Esophagus squamous epithelium (tissue), 5 donors: ENCODE measurements at regions of chr17 and their contacts with region 1.

Region 1: DNA sequence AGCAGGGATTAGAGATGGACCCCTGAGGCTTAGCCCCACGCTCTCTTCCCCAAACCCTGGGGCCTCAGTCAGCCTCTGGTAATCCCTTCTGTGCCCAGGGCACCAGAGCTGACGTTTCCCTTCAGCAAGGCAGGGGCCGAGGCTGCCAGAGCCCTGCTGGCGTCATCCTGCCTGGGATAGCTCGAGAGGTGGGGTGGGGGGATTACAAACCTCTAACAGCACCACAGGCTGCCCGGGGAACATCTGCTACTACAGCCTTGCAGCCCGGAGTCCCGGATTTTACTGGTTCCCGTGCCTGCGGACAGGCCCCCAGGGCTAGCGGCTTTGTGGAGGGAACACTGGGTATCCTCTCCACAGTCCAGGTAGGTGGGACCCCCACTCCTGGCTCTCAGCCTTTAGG is at the start of gene AANAT:
- DNase-seq: no peak
- H3K4me3 ChIP-seq: no peak within 1 kb of the TSS
- H3K27ac ChIP-seq: no peak within 1 kb of the TSS
- H3K4me1 ChIP-seq: peaks cover 0 to 4% (median 4%) of the 10 kb centered on the region in 3 donors
- H3K27me3 ChIP-seq: no peaks in the 10 kb centered on the region
- CTCF ChIP-seq: no peak
- POLR2A ChIP-seq: no peak
- total RNA-seq, gene AANAT: not detected

Region 2: DNA sequence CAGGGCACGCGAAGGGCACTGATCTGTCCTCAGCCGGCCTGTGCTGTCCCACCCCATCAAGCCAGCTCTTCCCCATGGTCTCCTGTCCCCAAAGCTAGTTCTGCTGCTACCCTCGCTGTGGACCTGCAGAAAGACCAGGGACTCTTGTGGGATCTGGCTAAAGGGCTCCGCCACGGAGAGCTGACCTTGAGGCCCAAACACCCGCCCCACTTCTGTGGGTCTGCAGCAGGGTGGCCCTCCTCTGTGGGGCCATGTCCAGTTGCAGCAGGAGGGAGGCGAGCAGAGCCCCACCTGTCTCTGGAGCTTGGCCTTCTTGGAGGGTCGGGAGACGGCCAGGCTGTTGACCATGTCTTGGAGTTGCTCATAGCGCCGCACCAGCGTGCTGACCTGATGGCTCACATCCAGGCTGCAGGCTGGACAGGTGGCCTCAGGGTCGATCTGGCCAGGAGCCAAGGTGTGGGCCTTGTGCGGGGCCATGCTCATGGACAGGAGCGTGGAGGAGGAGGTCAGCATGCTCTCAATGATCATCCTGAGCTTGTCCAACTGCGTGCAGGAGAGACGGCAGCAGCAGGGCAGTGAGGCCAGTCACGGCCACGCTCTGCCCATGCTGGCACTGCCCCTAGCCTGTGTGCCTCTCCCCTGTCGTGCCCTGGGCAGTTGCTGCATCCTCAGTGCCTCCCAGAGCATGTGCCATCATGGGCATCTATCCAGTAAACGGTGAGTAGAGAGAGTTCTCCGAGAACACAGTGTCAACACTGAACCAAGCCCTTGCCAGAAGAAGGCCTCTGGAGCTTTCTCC is 185.6 kb before region 1 on chr17:
- intact Hi-C with region 1: no loop called
- DNase-seq: no peak
- H3K4me3 ChIP-seq: no peak overlapping the region
- H3K27ac ChIP-seq: no peak overlapping the region
- H3K4me1 ChIP-seq: peaks cover 6 to 25% (median 9%) of the 10 kb centered on the region in 3 donors
- H3K27me3 ChIP-seq: no peaks in the 10 kb centered on the region
- CTCF ChIP-seq: no peak
- POLR2A ChIP-seq: no peak

Region 3: DNA sequence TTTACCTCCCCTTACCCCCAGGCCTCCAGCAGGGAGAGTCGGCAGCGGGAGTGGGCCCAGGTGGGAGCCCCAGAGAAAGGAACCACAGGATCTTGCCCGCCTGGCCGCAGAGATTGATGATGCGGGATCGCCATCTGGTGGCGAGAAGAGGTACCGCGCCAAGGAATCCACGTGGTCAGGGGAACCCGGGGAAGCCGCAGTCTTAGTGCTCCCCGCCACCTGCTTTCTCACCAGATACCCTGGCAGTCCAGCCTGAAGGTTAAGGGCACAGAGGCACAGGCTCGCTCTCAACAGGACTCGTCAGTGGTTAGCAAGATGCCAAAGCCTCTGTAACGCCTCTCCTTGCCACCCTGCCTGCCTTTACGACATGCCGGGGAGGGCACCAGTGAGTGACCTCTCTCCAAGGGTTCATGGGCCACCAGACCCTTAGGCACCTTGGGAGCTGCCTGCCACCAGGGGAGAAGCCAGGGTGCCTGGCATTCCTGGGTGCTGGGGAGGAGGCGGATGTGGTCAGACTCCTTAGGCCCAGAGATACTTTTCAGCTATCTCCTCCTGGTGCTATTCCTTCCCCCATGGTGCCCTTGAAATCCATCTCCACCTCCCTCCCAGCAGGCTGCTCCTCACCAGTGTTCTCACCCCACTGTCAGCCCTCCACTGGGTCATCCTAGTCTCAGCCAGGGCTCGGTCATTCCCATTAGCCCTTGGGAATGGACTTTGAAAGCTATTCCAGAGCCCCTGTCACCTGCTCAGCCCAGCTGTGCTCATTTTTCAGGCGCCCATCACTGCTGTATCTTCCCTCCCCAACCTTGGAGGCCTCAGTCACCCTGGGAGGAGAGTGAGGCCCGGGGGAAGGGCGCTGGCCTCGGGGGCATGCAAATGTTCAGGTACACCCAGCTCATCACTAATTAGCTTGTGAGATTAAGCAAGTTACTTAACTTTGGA is 39.3 kb after region 1 on chr17:
- intact Hi-C with region 1: loop called (anchors 2 kb)
- DNase-seq: no peak
- H3K4me3 ChIP-seq: no peak overlapping the region
- H3K27ac ChIP-seq: no peak overlapping the region
- H3K4me1 ChIP-seq: peaks cover 9 to 25% (median 9%) of the 10 kb centered on the region in 3 donors
- H3K27me3 ChIP-seq: peaks cover 0 to 26% (median 0%) of the 10 kb centered on the region in 4 donors
- CTCF ChIP-seq: peak; percentile 93 to 99 (median 98)
- POLR2A ChIP-seq: no peak